Dendritic cell treated with granulocyte-macrophage colony-stimulating factor and Interleukin-4, amounts not matched to agents 40 ng/mL and 50 ng/mL, for 4 days (primary cell): ENCODE measurements at regions of chr2 and their contacts with region 1.

Region 1: GRCh38 chr2:241609859-241610793 is 26.8 kb downstream of the THAP4 start:
- H3K4me3 Mint-ChIP-seq: peak overlapping the region; percentile 64
- H3K27ac Mint-ChIP-seq: peak overlapping the region; percentile 52
- H3K4me1 Mint-ChIP-seq: peaks cover 17% of the 10 kb centered on the region
- H3K27me3 Mint-ChIP-seq: peaks cover 5% of the 10 kb centered on the region

Region 2: DNA sequence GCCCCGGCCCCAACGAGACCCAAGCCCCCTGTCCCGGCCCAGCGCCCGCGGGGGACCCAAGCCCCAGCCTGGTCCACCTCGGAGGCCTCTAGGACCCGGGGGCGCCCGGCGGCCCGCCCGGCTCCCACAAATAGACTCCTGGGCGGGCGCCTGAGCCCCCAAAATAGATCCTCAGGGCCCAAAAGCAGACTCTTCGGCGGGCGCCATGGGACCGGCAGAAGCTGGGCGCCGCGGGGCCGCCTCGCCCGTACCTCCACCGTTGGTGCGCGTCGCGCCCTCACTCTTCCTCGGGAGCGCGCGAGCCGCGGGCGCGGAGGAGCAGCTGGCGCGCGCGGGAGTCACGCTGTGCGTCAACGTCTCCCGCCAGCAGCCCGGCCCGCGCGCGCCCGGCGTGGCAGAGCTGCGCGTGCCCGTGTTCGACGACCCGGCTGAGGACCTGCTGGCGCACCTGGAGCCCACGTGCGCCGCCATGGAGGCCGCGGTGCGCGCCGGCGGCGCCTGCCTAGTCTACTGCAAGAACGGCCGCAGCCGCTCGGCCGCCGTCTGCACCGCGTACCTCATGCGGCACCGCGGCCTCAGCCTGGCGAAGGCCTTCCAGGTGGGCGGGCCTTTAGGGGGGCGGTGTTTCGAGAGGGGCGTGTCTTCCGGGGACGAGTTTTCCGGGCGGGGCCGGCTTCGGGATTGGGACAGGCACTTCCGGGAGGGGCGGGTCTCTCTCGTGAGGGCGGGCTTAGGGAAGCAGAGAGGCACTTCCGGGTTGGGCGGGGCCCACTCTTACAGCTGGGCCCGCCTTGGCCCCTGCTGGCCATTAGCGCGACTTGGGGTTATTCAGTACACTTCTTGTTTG is 1049.4 kb before region 1 on chr2:
- intact Hi-C with region 1: loop called (anchors 10 kb)
- H3K4me3 Mint-ChIP-seq: peak overlapping the region; percentile 78
- H3K27ac Mint-ChIP-seq: peak overlapping the region; percentile 92
- H3K4me1 Mint-ChIP-seq: peaks cover 78% of the 10 kb centered on the region
- H3K27me3 Mint-ChIP-seq: no peaks in the 10 kb centered on the region

Region 3: GRCh38 chr2:241421330-241421729 is 188.8 kb before region 1 on chr2:
- intact Hi-C with region 1: no loop called
- H3K4me3 Mint-ChIP-seq: no peak overlapping the region
- H3K27ac Mint-ChIP-seq: no peak overlapping the region
- H3K4me1 Mint-ChIP-seq: no peaks in the 10 kb centered on the region
- H3K27me3 Mint-ChIP-seq: peaks cover 45% of the 10 kb centered on the region

Region 4: DNA sequence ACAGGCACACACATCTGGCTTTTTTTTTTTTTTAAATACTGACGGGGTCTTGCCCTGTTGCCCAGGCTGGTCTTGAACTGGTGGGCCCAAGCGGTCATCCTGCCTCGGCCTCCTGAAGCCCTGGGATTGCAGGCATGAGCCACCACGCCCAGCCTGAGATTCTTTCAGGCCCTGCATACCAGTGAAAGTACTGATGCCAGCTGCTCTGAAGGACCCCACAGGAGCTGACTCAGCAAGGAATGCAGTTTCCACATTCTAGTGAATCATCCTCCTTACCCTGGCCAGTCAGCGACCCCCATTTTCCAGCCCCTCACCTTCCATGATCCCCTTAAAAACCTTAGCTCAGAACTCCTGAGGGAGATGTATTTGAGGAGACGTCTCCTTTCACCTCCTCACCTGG is 82.3 kb after region 1 on chr2:
- intact Hi-C with region 1: no loop called
- H3K4me3 Mint-ChIP-seq: no peak overlapping the region
- H3K27ac Mint-ChIP-seq: no peak overlapping the region
- H3K4me1 Mint-ChIP-seq: peaks cover 5% of the 10 kb centered on the region
- H3K27me3 Mint-ChIP-seq: no peaks in the 10 kb centered on the region